Uterus (tissue), 4 donors: ENCODE measurements at regions of chr4 and their contacts with region 1.

Region 1: DNA sequence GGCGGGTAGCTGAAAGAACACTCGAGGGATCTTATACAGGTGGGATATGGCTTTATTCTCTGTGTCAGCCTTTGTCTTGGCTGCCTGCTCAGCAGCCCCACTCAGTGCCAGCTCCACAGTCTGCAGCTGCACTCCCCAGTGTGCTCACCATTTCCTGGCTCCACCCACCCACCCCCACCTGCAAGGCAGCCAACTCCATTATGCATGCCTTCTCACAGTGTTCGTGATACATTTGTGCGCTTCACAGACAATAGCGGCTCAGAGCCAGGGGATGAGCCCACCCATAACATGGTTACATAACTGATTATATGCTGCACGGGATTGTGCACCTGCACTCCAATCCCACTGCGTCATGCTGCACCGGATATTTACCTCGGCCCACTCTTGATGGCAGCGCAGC is 8.8 kb upstream of the TMEM128 start:
- DNase-seq: peak in 1 of 2 donors; percentile 24
- H3K4me3 ChIP-seq: no peak overlapping the region
- H3K27ac ChIP-seq: no peak overlapping the region
- H3K4me1 ChIP-seq: no peaks in the 10 kb centered on the region
- H3K27me3 ChIP-seq: no peaks in the 10 kb centered on the region
- CTCF ChIP-seq: no peak
- POLR2A ChIP-seq: no peak

Region 2: GRCh38 chr4:4334798-4335520 is 78.2 kb after region 1 on chr4:
- intact Hi-C with region 1: loop called (anchors 10 kb)
- DNase-seq: peak; percentile 24 to 37
- H3K4me3 ChIP-seq: no peak overlapping the region
- H3K27ac ChIP-seq: no peak overlapping the region
- H3K4me1 ChIP-seq: no peaks in the 10 kb centered on the region
- H3K27me3 ChIP-seq: no peaks in the 10 kb centered on the region
- CTCF ChIP-seq: peak; percentile 11 to 49 (median 36)
- POLR2A ChIP-seq: no peak